Natural killer cell (primary cell): ENCODE measurements at regions of chr3 and their contacts with region 1.

Region 1: DNA sequence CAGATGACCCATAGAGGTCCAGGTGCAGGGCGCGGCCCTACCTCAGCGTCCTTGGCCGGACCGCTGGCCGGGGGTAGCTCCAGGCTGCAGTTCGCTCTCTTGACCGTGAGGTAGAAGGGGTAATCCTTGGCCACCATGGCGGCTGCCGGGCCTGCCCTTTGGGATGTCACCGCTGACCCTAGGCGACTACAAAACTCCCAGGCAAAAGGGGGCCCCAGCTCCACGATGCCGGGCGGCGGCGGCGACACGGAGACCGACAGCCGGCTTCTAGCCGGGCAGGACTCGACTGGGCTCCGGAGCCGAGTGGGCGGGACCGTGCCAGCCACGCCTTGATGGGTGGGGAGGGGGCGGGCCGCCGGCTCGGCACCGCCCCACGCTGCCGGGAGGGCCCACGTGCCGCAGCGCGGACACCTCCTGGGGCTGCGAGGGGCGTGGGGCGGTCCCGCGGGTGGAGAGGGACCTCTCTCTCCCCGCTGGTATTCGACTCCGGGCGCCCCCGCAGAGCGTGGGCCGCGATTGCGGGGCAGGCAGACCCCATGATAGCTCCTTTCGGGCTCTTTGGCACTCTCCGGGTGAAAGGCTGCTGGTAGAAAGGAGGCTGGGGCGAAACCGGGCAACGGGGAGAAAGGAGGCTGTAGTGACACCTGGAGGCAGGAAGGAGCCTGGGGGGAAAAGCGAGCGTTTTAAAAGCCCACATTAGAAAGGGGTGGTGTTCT is at the start of gene ARHGEF3:
- DNase-seq: peak; percentile 84 to 93
- ATAC-seq: peak; percentile 85 to 95 (median 91)
- H3K4me3 ChIP-seq: peak within 1 kb of the TSS; percentile 99
- H3K4me3 Mint-ChIP-seq: peak within 1 kb of the TSS; percentile 90
- H3K27ac ChIP-seq: peak within 1 kb of the TSS; percentile 72
- H3K27ac Mint-ChIP-seq: peak within 1 kb of the TSS; percentile 92
- H3K4me1 ChIP-seq: peaks cover 28% of the 10 kb centered on the region
- H3K4me1 Mint-ChIP-seq: peaks cover 43 to 45% of the 10 kb centered on the region in 2 donors
- H3K27me3 ChIP-seq: no peaks in the 10 kb centered on the region
- H3K27me3 Mint-ChIP-seq: no peaks in the 10 kb centered on the region
- CTCF ChIP-seq: peak; percentile 70
- total RNA-seq, gene ARHGEF3: 112 to 211 (median 135) TPM

Region 2: DNA sequence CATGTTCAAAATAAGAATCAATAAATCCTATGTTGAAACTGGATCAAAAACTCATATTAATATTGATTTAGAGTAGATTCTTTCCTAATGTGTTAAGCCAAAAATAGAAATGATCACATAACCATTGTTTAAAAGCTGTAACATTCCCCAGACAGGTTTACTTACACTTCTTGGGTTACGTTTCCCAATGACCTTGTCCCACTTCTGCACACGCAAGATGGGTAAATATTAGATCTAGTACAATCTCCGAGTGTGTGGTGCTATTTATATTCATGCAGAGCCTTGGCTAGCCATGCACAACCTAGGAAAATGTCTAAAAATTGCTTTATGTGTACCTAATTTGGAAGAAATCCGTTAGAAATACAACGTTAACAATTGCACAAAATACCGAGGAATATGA is 373.2 kb before region 1 on chr3:
- intact Hi-C with region 1: no loop called
- DNase-seq: no peak
- ATAC-seq: no peak
- H3K4me3 ChIP-seq: no peak overlapping the region
- H3K4me3 Mint-ChIP-seq: no peak overlapping the region
- H3K27ac ChIP-seq: no peak overlapping the region
- H3K27ac Mint-ChIP-seq: no peak overlapping the region
- H3K4me1 ChIP-seq: no peaks in the 10 kb centered on the region
- H3K4me1 Mint-ChIP-seq: no peaks in the 10 kb centered on the region
- H3K27me3 ChIP-seq: no peaks in the 10 kb centered on the region
- H3K27me3 Mint-ChIP-seq: peaks cover 21 to 47% of the 10 kb centered on the region in 2 donors
- CTCF ChIP-seq: no peak

Region 3: GRCh38 chr3:56556908-56557830 is 244.7 kb before region 1 on chr3 and contains the start of gene CCDC66:
- intact Hi-C with region 1: loop called (anchors 5 kb)
- DNase-seq: peak; percentile 89 to 96
- ATAC-seq: peak; percentile 96 to 98 (median 97)
- H3K4me3 ChIP-seq: peak within 1 kb of the TSS; percentile 87
- H3K4me3 Mint-ChIP-seq: peak within 1 kb of the TSS; percentile 98
- H3K27ac ChIP-seq: peak within 1 kb of the TSS; percentile 90
- H3K27ac Mint-ChIP-seq: peak within 1 kb of the TSS; percentile 95 to 100
- H3K4me1 ChIP-seq: peaks cover 3% of the 10 kb centered on the region
- H3K4me1 Mint-ChIP-seq: peaks cover 28 to 30% of the 10 kb centered on the region in 2 donors
- H3K27me3 ChIP-seq: no peaks in the 10 kb centered on the region
- H3K27me3 Mint-ChIP-seq: peaks cover 8 to 28% of the 10 kb centered on the region in 2 donors
- CTCF ChIP-seq: peak; percentile 66
- total RNA-seq, gene CCDC66: 25.5 to 36.0 (median 35.0) TPM

Region 4: GRCh38 chr3:56737006-56737405 is 64.8 kb before region 1 on chr3:
- intact Hi-C with region 1: loop called (anchors 2 kb)
- DNase-seq: no peak
- ATAC-seq: no peak
- H3K4me3 ChIP-seq: no peak overlapping the region
- H3K4me3 Mint-ChIP-seq: no peak overlapping the region
- H3K27ac ChIP-seq: no peak overlapping the region
- H3K27ac Mint-ChIP-seq: peak overlapping the region; percentile 89 to 94
- H3K4me1 ChIP-seq: peaks cover 24% of the 10 kb centered on the region
- H3K4me1 Mint-ChIP-seq: peaks cover 36 to 46% of the 10 kb centered on the region in 2 donors
- H3K27me3 ChIP-seq: no peaks in the 10 kb centered on the region
- H3K27me3 Mint-ChIP-seq: no peaks in the 10 kb centered on the region
- CTCF ChIP-seq: no peak

Region 5: DNA sequence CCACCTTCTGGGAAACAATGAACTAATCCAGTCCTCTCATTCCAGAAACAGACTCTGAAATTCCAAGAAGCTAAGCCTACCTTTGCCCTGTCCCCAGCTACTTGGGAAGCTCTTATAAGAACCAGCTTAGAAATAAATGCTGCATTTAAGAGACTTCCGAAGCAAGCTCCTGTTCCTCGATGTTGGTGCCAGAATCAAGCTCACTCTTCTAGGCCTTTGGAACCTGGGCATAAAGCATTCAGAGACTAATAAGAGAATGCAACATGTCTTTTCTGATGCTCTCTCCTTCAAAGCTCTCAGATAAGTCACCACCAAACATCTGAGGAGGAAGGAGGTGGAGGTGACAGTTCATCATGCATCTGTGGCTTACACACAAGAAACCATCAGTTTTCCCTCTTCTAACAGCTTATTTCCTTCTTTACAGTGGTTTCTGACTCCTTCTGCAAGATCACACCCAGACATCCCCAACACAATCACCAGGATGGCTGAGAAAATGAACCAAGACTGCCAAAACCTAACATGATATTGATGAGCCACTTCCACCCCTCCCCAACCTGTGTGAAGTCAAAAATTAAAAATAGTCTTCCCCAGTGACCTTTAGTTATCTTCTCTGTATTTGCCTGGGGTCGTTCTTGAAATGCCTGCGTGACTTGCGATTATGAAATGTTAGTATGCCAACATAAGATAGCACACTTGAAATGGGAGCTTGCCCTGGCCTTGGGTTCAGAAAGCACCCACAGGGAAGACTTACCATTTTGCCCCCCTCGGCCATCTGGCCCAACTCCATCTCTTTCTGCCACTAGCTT is 11.6 kb before region 1 on chr3:
- intact Hi-C with region 1: loop called (anchors 1 kb)
- DNase-seq: peak in 1 of 2 donors; percentile 73
- ATAC-seq: peak; percentile 60 to 80 (median 73)
- H3K4me3 ChIP-seq: no peak overlapping the region
- H3K4me3 Mint-ChIP-seq: peak overlapping the region; percentile 86
- H3K27ac ChIP-seq: peak overlapping the region; percentile 86
- H3K27ac Mint-ChIP-seq: peak overlapping the region; percentile 85 to 92
- H3K4me1 ChIP-seq: peaks cover 87% of the 10 kb centered on the region
- H3K4me1 Mint-ChIP-seq: peaks cover 88 to 91% of the 10 kb centered on the region in 2 donors
- H3K27me3 ChIP-seq: no peaks in the 10 kb centered on the region
- H3K27me3 Mint-ChIP-seq: no peaks in the 10 kb centered on the region
- CTCF ChIP-seq: no peak

Region 6: GRCh38 chr3:56988458-56989168 is 186.8 kb after region 1 on chr3:
- intact Hi-C with region 1: loop called (anchors 2 kb)
- DNase-seq: peak; percentile 57 to 90
- ATAC-seq: peak; percentile 73 to 80 (median 75)
- H3K4me3 ChIP-seq: no peak overlapping the region
- H3K4me3 Mint-ChIP-seq: no peak overlapping the region
- H3K27ac ChIP-seq: no peak overlapping the region
- H3K27ac Mint-ChIP-seq: no peak overlapping the region
- H3K4me1 ChIP-seq: peaks cover 6% of the 10 kb centered on the region
- H3K4me1 Mint-ChIP-seq: peaks cover 4 to 5% of the 10 kb centered on the region in 2 donors
- H3K27me3 ChIP-seq: peaks cover 2% of the 10 kb centered on the region
- H3K27me3 Mint-ChIP-seq: peaks cover 8 to 14% of the 10 kb centered on the region in 2 donors
- CTCF ChIP-seq: peak; percentile 93